WTC11 (cell line): ENCODE measurements at regions of chr7 and their contacts with region 1.

Region 1: GRCh38 chr7:140640727-140641523 is at the start of gene DENND2A:
- DNase-seq: peak; percentile 80
- ATAC-seq: peak; percentile 43
- H3K4me3 Mint-ChIP-seq: peak within 1 kb of the TSS; percentile 97
- H3K27ac Mint-ChIP-seq: peak within 1 kb of the TSS; percentile 48; the same call in 1 of the 2 replicates
- H3K4me1 Mint-ChIP-seq: peaks cover 41% of the 10 kb centered on the region
- H3K27me3 Mint-ChIP-seq: peaks cover 41% of the 10 kb centered on the region
- CTCF ChIP-seq: no peak
- total RNA-seq, gene DENND2A: 10.0 to 13.6 TPM (median 12.7 TPM) in 3 replicates

Region 2: GRCh38 chr7:140517546-140518369 is 123.2 kb before region 1 on chr7:
- CTCF ChIA-PET with region 1: interaction called, 16 read pairs
- POLR2A ChIA-PET with region 1: interaction called, 8 read pairs
- DNase-seq: peak; percentile 95
- ATAC-seq: peak; percentile 93
- H3K4me3 Mint-ChIP-seq: no peak overlapping the region
- H3K27ac Mint-ChIP-seq: peak overlapping the region; percentile 76
- H3K4me1 Mint-ChIP-seq: peaks cover 20% of the 10 kb centered on the region
- H3K27me3 Mint-ChIP-seq: no peaks in the 10 kb centered on the region
- CTCF ChIP-seq: peak; percentile 80

Region 3: DNA sequence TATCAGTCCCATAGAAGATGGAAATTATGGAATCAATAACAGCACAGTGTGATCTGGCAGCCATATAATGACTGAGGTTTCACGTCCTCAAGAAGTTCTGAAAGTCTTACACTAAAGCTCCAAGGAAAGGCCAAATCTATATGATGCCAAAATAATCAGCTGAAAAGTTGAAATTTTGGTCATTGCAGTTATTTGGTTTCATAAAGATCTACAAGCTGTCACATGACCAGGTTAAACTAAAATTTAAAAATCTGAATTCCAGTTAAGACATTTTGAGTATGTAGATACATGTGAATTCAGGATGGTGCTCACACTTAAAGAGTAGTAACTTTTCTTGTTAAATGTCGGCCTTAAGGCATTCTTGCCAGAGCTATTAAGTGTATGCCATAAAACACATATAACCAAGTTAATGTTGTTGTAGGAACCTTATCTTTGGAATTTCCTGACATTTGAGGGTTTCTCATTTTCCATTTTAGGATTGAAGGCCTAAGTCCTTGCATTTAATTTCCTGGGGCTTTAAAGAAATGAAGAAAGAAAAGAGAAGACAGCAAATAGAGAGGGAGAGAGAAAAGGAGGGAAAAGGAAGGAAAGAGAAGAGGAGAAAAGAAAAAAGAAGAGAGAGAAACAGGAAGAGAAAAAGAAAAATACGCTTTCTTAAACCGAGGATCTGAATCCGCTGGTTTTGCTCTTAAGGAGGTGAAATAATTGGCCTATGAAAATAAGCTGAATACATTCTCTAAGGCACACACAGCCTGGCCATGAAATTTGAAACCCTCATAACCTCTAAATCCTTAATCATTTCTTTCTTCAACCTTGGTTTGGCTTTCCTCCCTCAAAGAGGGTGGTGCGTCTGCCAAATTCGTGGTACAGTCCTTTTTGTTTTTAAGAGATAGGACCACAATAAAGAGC is 44.2 kb before region 1 on chr7:
- CTCF ChIA-PET with region 1: interaction called, 10 read pairs
- POLR2A ChIA-PET with region 1: no interaction called
- DNase-seq: no peak
- ATAC-seq: no peak
- H3K4me3 Mint-ChIP-seq: no peak overlapping the region
- H3K27ac Mint-ChIP-seq: peak overlapping the region; percentile 75; the same call in 1 of the 2 replicates
- H3K4me1 Mint-ChIP-seq: peaks cover 12% of the 10 kb centered on the region
- H3K27me3 Mint-ChIP-seq: no peaks in the 10 kb centered on the region
- CTCF ChIP-seq: no peak

Region 4: DNA sequence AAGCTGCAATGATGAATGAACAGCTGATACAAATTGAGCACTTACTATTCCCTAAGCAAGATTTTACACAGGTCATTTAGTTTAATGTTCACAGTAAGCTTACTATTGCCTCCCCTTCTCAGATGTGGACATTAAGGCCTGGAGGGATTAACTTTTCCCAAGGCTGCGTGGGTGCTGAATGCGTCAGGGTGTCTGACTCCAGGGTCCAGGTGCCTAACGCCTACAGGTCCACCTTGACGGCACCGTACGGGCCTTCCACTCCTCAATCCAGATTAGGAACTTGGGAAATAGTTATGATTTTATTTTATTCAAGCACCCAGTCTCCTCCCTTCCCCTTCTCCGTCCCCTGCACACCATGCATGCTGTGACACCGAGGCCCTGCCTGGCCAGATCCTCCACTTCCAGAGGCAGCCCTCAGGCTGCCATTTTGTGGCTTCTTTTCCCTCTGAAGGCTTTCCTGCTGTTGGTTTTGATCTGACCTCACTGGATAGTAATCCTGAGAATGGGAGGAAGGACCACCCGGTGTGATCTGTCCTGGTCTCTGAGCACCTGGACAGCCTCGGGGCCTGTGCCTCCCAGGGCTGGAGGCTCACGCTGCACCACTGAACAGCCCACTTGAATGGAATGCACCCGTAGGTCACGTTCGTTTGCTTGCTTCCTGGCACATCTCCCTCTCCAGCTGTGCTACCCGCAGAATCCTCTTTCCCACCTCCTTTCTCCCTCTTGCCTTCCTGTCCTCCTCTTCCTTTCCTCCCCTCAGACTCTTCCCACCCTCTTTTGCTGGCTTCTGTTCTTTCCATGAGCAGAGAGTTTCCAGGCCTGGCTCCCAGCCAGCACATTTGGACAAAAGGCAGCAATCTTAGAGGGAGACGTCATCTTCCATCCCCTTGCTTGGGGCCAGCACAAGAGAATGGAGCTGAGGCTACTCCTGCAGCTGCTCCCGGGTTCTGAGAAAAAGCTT is 14.7 kb before region 1 on chr7:
- CTCF ChIA-PET with region 1: interaction called, 10 read pairs
- POLR2A ChIA-PET with region 1: no interaction called
- DNase-seq: peak; percentile 72
- ATAC-seq: peak; percentile 81
- H3K4me3 Mint-ChIP-seq: no peak overlapping the region
- H3K27ac Mint-ChIP-seq: peak overlapping the region; percentile 96
- H3K4me1 Mint-ChIP-seq: peaks cover 27% of the 10 kb centered on the region
- H3K27me3 Mint-ChIP-seq: no peaks in the 10 kb centered on the region
- CTCF ChIP-seq: no peak

Region 5: DNA sequence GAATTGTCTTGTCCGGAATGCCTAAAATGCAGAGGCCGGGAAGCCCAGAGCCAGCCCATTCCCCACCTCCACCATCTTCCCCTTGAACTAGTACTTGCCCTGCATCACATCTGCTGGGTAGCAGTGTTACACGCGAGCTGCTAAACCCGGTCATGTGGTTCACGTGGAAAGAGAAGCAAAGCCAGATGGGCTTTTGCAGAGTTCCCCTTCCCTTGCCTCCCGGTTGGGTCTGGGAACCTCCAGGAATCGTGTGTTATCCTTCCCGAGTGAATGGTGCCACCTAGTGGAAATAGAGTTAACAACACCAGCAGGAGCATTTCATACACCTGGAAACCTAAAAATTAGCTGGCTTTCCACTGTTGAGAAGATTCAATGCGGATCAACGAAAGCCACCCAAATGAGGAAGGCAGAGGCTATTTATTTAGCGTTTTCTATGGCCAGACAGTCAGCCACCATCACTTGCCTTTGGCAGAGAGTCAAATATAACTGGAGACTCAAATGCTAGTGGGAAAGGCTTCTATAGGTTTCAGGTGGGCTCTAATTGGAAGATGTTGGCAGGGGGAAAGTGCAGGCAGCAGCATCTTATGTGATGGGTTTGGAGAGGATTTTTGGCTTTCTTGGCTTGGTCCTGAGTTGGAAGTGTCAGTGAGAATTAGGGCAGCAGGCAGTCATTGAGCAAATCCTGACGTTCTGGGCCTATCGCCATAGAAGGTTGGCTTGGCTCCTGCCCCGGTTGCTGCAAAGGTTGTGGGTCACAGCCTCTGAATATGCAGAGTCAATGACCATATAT is 12.6 kb after region 1 on chr7:
- CTCF ChIA-PET with region 1: interaction called, 9 read pairs
- POLR2A ChIA-PET with region 1: interaction called, 10 read pairs
- DNase-seq: peak; percentile 66
- ATAC-seq: peak; percentile 90
- H3K4me3 Mint-ChIP-seq: no peak overlapping the region
- H3K27ac Mint-ChIP-seq: no peak overlapping the region
- H3K4me1 Mint-ChIP-seq: peaks cover 11% of the 10 kb centered on the region; the same call in 1 of the 2 replicates
- H3K27me3 Mint-ChIP-seq: no peaks in the 10 kb centered on the region
- CTCF ChIP-seq: peak; percentile 74

Region 6: GRCh38 chr7:140673063-140673773 is 32.3 kb after region 1 on chr7:
- CTCF ChIA-PET with region 1: interaction called, 13 read pairs
- POLR2A ChIA-PET with region 1: no interaction called
- DNase-seq: peak; percentile 61
- ATAC-seq: peak; percentile 73
- H3K4me3 Mint-ChIP-seq: peak overlapping the region; percentile 76
- H3K27ac Mint-ChIP-seq: no peak overlapping the region
- H3K4me1 Mint-ChIP-seq: peaks cover 11% of the 10 kb centered on the region
- H3K27me3 Mint-ChIP-seq: 0 out of 2 replicates have a peak, but pooled peaks cover 2% of the 10 kb centered on the region
- CTCF ChIP-seq: no peak

Region 7: GRCh38 chr7:140714331-140715040 is 73.6 kb after region 1 on chr7:
- CTCF ChIA-PET with region 1: no interaction called
- POLR2A ChIA-PET with region 1: no interaction called
- DNase-seq: no peak
- ATAC-seq: no peak
- H3K4me3 Mint-ChIP-seq: no peak overlapping the region
- H3K27ac Mint-ChIP-seq: no peak overlapping the region
- H3K4me1 Mint-ChIP-seq: no peaks in the 10 kb centered on the region
- H3K27me3 Mint-ChIP-seq: no peaks in the 10 kb centered on the region
- CTCF ChIP-seq: no peak